ENCODE measurements at regions of chr1 and their contacts with region 1.

Region 1: GRCh38 chr1:45521398-45522323 is at the start of gene PRDX1:
- DNase-seq: peak; percentile 93
- ATAC-seq: peak; percentile 91
- H3K4me3 ChIP-seq: peak within 1 kb of the TSS; percentile 96
- H3K27ac ChIP-seq: peak within 1 kb of the TSS; percentile 89
- H3K4me1 ChIP-seq: peaks cover 10% of the 10 kb centered on the region; the same call in 1 of the 2 replicates
- H3K27me3 ChIP-seq: no peaks in the 10 kb centered on the region
- CTCF ChIP-seq: no peak
- EP300 ChIP-seq: 0 out of 4 replicates have a peak, but pooled peaks of 1 of the 2 experiments have one; percentile 4
- POLR2A ChIP-seq: peak; percentile 100
- RAD21 ChIP-seq: 0 out of 2 replicates have a peak, but pooled peaks have one; percentile 13
- polyA plus RNA-seq, gene PRDX1: 1,264 to 1,775 TPM

Region 2: DNA sequence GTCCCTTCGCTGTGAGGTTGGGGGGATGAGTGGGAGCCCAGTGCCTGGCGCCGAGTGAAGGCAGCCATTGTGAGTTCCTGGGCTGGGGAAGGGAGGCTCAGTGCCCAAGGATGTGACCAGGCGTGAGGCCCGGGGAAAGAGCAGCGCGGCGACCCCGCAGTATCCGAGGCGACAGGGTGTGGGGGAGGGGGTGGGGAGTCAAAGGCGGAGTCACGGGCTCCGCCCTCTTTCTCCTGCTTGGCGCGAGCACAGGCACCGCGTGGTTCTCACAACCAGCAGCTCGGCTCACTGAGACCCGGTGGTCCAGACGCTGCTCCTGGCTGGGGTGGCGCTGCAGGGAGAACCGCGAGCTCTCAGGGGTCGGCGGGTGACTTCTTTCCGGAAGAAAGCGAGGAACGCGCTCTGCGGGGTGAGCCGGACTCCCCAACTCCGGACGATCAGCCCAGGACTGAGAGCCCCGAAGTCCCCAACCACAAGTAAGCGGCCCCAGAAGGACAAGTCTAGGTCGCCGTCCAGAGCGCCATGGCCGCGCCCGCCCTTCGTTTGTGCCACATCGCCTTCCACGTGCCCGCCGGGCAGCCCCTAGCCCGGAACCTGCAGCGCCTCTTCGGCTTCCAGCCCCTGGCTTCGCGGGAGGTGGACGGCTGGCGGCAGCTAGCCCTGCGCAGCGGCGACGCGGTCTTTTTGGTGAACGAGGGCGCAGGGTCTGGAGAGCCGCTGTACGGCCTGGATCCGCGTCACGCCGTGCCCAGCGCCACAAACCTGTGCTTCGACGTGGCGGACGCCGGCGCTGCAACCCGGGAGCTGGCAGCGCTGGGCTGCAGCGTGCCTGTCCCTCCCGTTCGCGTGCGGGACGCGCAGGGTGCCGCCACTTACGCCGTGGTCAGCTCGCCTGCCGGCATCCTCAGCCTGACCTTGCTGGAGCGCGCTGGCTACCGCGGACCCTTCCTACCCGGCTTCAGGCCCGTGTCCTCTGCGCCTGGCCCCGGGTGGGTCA is 194.7 kb before region 1 on chr1 and contains the start of gene HPDL:
- CTCF ChIA-PET with region 1: no interaction called
- POLR2A ChIA-PET with region 1: interaction called, 10 read pairs
- RAD21 ChIA-PET with region 1: interaction called, 3 read pairs
- SMC1A ChIA-PET with region 1: no interaction called
- in situ Hi-C with region 1: no loop called
- intact Hi-C with region 1: no loop called
- DNase-seq: no peak
- ATAC-seq: peak; percentile 89
- H3K4me3 ChIP-seq: peak within 1 kb of the TSS; percentile 82
- H3K27ac ChIP-seq: peak within 1 kb of the TSS; percentile 80
- H3K4me1 ChIP-seq: peaks cover 16% of the 10 kb centered on the region; the same call in 1 of the 2 replicates
- H3K27me3 ChIP-seq: no peaks in the 10 kb centered on the region
- CTCF ChIP-seq: 0 out of 6 replicates have a peak, but pooled peaks of 1 of the 3 experiments have one; percentile 5
- EP300 ChIP-seq: no peak
- POLR2A ChIP-seq: peak; percentile 91
- RAD21 ChIP-seq: no peak
- polyA plus RNA-seq, gene HPDL: 1.3 to 3.6 TPM

Region 3: GRCh38 chr1:45535988-45536766 is 14.5 kb after region 1 on chr1:
- CTCF ChIA-PET with region 1: interaction called, 10 read pairs
- POLR2A ChIA-PET with region 1: interaction called, 118 read pairs
- RAD21 ChIA-PET with region 1: interaction called, 6 read pairs
- SMC1A ChIA-PET with region 1: interaction called, 80 read pairs
- in situ Hi-C with region 1: no loop called
- intact Hi-C with region 1: no loop called
- DNase-seq: no peak
- ATAC-seq: no peak; the same call in 2 of the 3 replicates
- H3K4me3 ChIP-seq: no peak overlapping the region
- H3K27ac ChIP-seq: no peak overlapping the region
- H3K4me1 ChIP-seq: no peaks in the 10 kb centered on the region
- H3K27me3 ChIP-seq: no peaks in the 10 kb centered on the region
- CTCF ChIP-seq: no peak
- EP300 ChIP-seq: no peak
- POLR2A ChIP-seq: no peak
- RAD21 ChIP-seq: no peak

Region 4: GRCh38 chr1:45550401-45551351 is 29.0 kb after region 1 on chr1 and contains the start of gene AKR1A1:
- CTCF ChIA-PET with region 1: interaction called, 14 read pairs
- POLR2A ChIA-PET with region 1: interaction called, 118 read pairs
- RAD21 ChIA-PET with region 1: interaction called, 40 read pairs
- SMC1A ChIA-PET with region 1: interaction called, 80 read pairs
- in situ Hi-C with region 1: no loop called
- intact Hi-C with region 1: loop called (anchors 2 kb)
- DNase-seq: peak; percentile 74
- ATAC-seq: peak; percentile 94
- H3K4me3 ChIP-seq: peak within 1 kb of the TSS; percentile 87
- H3K27ac ChIP-seq: peak within 1 kb of the TSS; percentile 91
- H3K4me1 ChIP-seq: peaks cover 16% of the 10 kb centered on the region
- H3K27me3 ChIP-seq: no peaks in the 10 kb centered on the region
- CTCF ChIP-seq: no peak
- EP300 ChIP-seq: no peak
- POLR2A ChIP-seq: peak; percentile 92
- RAD21 ChIP-seq: no peak
- polyA plus RNA-seq, gene AKR1A1: 199 to 200 TPM

Region 5: DNA sequence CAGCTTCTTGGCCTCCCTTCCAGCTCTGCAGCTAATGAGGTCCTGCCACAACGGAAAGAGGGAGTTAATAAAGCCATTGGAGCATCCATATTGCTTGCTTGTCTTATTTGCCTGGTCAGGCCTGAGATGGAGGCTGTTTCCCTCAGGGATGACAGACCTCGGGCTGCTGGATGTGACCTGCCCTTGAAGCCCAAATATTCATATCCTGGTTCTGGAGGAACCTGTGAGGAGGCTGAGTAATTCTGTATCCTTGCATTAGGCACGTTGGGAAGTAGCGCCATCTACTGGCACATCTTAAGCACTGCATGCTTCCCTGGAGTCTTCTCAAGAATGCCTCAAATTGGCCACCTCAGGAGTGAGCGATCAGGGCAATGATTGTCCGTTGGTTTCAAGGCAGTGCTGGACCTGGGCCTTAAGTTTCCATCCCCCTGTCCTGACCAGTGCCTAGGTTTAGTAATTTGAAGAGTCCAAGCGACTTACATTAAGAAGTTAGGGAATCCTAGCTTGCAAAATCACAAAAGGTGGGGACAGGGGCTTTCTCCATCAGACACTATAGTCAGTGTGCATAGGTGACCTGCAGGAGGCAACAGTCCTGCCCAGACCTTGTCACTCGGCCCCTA is 48.4 kb after region 1 on chr1:
- CTCF ChIA-PET with region 1: interaction called, 89 read pairs
- POLR2A ChIA-PET with region 1: interaction called, 31 read pairs
- RAD21 ChIA-PET with region 1: interaction called, 37 read pairs
- SMC1A ChIA-PET with region 1: interaction called, 56 read pairs
- in situ Hi-C with region 1: no loop called
- intact Hi-C with region 1: loop called (anchors 2 kb)
- DNase-seq: no peak
- ATAC-seq: peak; percentile 97
- H3K4me3 ChIP-seq: no peak overlapping the region
- H3K27ac ChIP-seq: no peak overlapping the region
- H3K4me1 ChIP-seq: no peaks in the 10 kb centered on the region
- H3K27me3 ChIP-seq: no peaks in the 10 kb centered on the region
- CTCF ChIP-seq: peak; percentile 97 to 99 (median 98); a peak in 5 of 6 replicates
- EP300 ChIP-seq: no peak
- POLR2A ChIP-seq: 0 out of 2 replicates have a peak, but pooled peaks have one; percentile 14
- RAD21 ChIP-seq: peak; percentile 95